WTC11 (cell line): ENCODE measurements at regions of chr2 and their contacts with region 1.

Region 1: GRCh38 chr2:240579771-240580614 is 6.5 kb upstream of the CAPN10 start:
- DNase-seq: peak; percentile 77
- ATAC-seq: peak; percentile 69
- H3K4me3 Mint-ChIP-seq: no peak overlapping the region
- H3K27ac Mint-ChIP-seq: peak overlapping the region; percentile 49; the same call in 1 of the 2 replicates
- H3K4me1 Mint-ChIP-seq: peaks cover 21% of the 10 kb centered on the region
- H3K27me3 Mint-ChIP-seq: no peaks in the 10 kb centered on the region
- CTCF ChIP-seq: peak; percentile 42

Region 2: DNA sequence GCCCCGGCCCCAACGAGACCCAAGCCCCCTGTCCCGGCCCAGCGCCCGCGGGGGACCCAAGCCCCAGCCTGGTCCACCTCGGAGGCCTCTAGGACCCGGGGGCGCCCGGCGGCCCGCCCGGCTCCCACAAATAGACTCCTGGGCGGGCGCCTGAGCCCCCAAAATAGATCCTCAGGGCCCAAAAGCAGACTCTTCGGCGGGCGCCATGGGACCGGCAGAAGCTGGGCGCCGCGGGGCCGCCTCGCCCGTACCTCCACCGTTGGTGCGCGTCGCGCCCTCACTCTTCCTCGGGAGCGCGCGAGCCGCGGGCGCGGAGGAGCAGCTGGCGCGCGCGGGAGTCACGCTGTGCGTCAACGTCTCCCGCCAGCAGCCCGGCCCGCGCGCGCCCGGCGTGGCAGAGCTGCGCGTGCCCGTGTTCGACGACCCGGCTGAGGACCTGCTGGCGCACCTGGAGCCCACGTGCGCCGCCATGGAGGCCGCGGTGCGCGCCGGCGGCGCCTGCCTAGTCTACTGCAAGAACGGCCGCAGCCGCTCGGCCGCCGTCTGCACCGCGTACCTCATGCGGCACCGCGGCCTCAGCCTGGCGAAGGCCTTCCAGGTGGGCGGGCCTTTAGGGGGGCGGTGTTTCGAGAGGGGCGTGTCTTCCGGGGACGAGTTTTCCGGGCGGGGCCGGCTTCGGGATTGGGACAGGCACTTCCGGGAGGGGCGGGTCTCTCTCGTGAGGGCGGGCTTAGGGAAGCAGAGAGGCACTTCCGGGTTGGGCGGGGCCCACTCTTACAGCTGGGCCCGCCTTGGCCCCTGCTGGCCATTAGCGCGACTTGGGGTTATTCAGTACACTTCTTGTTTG is 19.3 kb before region 1 on chr2:
- CTCF ChIA-PET with region 1: interaction called, 40 read pairs
- POLR2A ChIA-PET with region 1: no interaction called
- DNase-seq: peak; percentile 100
- ATAC-seq: peak; percentile 77
- H3K4me3 Mint-ChIP-seq: peak overlapping the region; percentile 76
- H3K27ac Mint-ChIP-seq: no peak overlapping the region
- H3K4me1 Mint-ChIP-seq: peaks cover 33% of the 10 kb centered on the region
- H3K27me3 Mint-ChIP-seq: peaks cover 32% of the 10 kb centered on the region
- CTCF ChIP-seq: no peak

Region 3: DNA sequence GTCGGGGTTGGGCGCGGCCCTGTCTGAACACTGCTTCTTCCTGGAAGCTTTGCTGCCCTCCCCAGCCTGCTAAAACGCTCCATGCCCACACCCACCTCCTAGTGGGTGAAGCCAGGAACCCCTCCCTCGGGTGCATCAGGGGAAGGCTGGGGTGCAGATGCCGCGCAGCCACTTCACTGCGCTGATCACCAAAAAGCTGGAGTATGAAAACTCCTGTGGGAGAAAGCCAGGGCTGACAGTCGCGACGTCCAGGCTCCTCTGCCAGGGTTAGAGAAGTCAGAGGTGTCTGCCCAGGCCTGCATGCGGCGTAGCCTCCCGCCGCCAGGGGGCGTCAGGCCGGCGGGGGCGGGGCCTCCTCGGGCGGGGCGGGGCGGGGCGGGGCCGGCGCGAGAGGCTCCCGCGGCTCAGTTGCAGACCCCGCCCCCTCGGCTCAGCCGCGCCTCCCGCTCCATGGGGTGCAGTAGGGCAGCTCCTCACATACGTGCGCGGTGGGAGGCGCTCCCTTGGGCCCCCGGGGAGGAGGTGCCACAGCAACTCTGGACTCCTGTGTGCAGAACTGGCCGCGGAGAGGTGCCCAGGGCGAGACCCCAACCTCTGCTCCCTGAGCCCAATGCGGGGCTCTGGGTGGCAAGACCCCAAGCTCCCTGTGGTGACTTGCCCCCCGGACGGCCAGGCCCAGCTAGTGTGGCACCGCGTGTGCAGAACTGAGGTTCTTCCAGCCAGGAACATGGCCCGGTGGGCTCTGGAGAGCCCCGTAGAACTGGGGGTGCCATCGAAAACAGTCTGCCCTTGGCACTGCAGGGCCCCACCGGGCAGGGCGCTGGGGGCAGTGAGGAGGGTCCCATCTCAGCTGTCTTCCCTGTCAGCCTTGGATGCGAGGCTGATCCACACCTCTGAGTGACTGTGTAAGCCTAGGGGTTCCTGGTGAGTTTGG is 13.5 kb before region 1 on chr2:
- CTCF ChIA-PET with region 1: interaction called, 40 read pairs
- POLR2A ChIA-PET with region 1: no interaction called
- DNase-seq: peak; percentile 86
- ATAC-seq: peak; percentile 67
- H3K4me3 Mint-ChIP-seq: peak overlapping the region; percentile 69
- H3K27ac Mint-ChIP-seq: no peak overlapping the region
- H3K4me1 Mint-ChIP-seq: peaks cover 25% of the 10 kb centered on the region
- H3K27me3 Mint-ChIP-seq: peaks cover 28% of the 10 kb centered on the region
- CTCF ChIP-seq: peak; percentile 94